ENCODE measurements at regions of chr11 and their contacts with region 1.

Region 1: GRCh38 chr11:70191495-70192140 is 11.5 kb upstream of the FADD start:
- DNase-seq: peak in 3 of 5 donors; percentile 8 to 24 (median 21)
- H3K4me3 ChIP-seq: no peak overlapping the region
- H3K4me3 Mint-ChIP-seq: no peak overlapping the region
- H3K27ac ChIP-seq: no peak overlapping the region
- H3K27ac Mint-ChIP-seq: no peak overlapping the region
- H3K4me1 ChIP-seq: peaks cover 4% of the 10 kb centered on the region
- H3K4me1 Mint-ChIP-seq: peaks cover 0 to 6% (median 4%) of the 10 kb centered on the region in 4 donors
- H3K27me3 ChIP-seq: no peaks in the 10 kb centered on the region
- H3K27me3 Mint-ChIP-seq: peaks cover 7 to 8% of the 10 kb centered on the region in 2 donors

Region 2: DNA sequence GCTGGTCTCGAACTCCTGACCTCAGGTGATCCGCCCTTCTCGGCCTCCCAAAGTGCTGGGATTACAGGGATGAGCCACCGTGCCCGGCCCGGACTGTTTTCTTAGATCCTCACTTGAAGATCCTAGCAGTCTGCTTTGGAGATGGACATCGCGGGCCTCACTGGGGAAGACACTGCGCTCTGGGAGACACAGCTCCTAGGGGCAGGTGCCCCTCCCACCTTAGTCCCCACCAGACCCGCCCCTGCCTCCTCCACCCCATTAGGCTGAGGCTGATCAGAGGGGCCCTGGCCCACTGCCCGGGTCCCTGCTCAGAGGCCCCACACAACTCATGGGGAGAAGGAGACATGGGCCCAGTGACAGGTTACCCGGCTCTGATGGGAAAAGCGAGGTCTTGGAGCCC is 505.2 kb before region 1 on chr11:
- CTCF ChIA-PET with region 1: interaction called, 3 read pairs
- POLR2A ChIA-PET with region 1: interaction called, 3 read pairs
- intact Hi-C with region 1: loop called (anchors 2 kb)
- DNase-seq: no peak
- H3K4me3 ChIP-seq: no peak overlapping the region
- H3K4me3 Mint-ChIP-seq: peak overlapping the region in 1 of 8 donors; percentile 39
- H3K27ac ChIP-seq: no peak overlapping the region
- H3K27ac Mint-ChIP-seq: no peak overlapping the region
- H3K4me1 ChIP-seq: peaks cover 7% of the 10 kb centered on the region
- H3K4me1 Mint-ChIP-seq: peaks cover 2 to 7% (median 4%) of the 10 kb centered on the region in 4 donors
- H3K27me3 ChIP-seq: no peaks in the 10 kb centered on the region
- H3K27me3 Mint-ChIP-seq: peaks cover 12 to 16% of the 10 kb centered on the region in 2 donors

Region 3: GRCh38 chr11:69909561-69910496 is 281.8 kb before region 1 on chr11:
- CTCF ChIA-PET with region 1: interaction called, 4 read pairs
- POLR2A ChIA-PET with region 1: no interaction called
- intact Hi-C with region 1: loop called (anchors 2 kb)
- DNase-seq: no peak
- H3K4me3 ChIP-seq: no peak overlapping the region
- H3K4me3 Mint-ChIP-seq: no peak overlapping the region
- H3K27ac ChIP-seq: no peak overlapping the region
- H3K27ac Mint-ChIP-seq: no peak overlapping the region
- H3K4me1 ChIP-seq: no peaks in the 10 kb centered on the region
- H3K4me1 Mint-ChIP-seq: no peaks in the 10 kb centered on the region
- H3K27me3 ChIP-seq: no peaks in the 10 kb centered on the region
- H3K27me3 Mint-ChIP-seq: peaks cover 11 to 20% of the 10 kb centered on the region in 2 donors

Region 4: DNA sequence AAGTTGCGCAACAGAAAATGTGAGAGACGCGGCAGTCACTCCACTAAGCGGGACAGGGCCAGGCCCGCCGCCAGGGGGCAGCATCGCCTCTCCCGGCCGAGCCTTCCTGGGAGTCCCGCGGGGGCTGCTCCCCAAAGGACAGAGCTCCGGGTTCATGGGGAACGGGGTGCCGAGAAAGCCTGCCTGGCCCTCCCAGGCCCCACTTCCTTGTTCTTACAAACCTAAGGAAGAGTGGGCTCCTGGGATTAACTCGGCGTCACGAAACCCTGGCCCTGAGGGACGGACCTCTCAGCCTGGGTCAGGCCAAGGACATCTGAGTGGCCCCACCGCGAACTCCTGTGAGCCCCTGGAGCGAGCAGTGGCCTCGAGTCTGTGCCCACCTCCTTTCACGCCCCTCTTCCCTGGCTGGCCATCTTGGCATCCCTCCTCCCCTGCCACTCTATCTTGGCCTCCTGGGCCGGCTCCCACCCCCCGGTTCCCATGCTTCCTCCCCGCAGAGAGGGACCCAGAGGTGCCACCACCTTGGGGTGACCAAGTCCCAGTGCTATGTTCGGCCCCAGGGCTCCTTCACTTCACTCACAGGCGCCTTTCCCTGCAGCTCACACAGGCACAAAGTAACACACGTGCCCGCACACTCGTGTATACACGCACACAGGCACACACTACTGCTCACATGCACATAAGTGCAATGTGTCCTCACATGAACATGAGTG is 272.5 kb before region 1 on chr11:
- CTCF ChIA-PET with region 1: interaction called, 11 read pairs
- POLR2A ChIA-PET with region 1: no interaction called
- intact Hi-C with region 1: loop called (anchors 1 kb)
- DNase-seq: peak in 4 of 5 donors; percentile 43 to 58 (median 46)
- H3K4me3 ChIP-seq: no peak overlapping the region
- H3K4me3 Mint-ChIP-seq: no peak overlapping the region
- H3K27ac ChIP-seq: no peak overlapping the region
- H3K27ac Mint-ChIP-seq: peak overlapping the region in 1 of 7 donors; percentile 41
- H3K4me1 ChIP-seq: no peaks in the 10 kb centered on the region
- H3K4me1 Mint-ChIP-seq: peaks cover 0 to 4% (median 3%) of the 10 kb centered on the region in 4 donors
- H3K27me3 ChIP-seq: no peaks in the 10 kb centered on the region
- H3K27me3 Mint-ChIP-seq: peaks cover 19 to 21% of the 10 kb centered on the region in 2 donors

Region 5: GRCh38 chr11:70153133-70153727 is 38.4 kb before region 1 on chr11:
- CTCF ChIA-PET with region 1: no interaction called
- POLR2A ChIA-PET with region 1: no interaction called
- intact Hi-C with region 1: no loop called
- DNase-seq: no peak
- H3K4me3 ChIP-seq: no peak overlapping the region
- H3K4me3 Mint-ChIP-seq: no peak overlapping the region
- H3K27ac ChIP-seq: no peak overlapping the region
- H3K27ac Mint-ChIP-seq: no peak overlapping the region
- H3K4me1 ChIP-seq: no peaks in the 10 kb centered on the region
- H3K4me1 Mint-ChIP-seq: no peaks in the 10 kb centered on the region
- H3K27me3 ChIP-seq: no peaks in the 10 kb centered on the region
- H3K27me3 Mint-ChIP-seq: peaks cover 5 to 10% of the 10 kb centered on the region in 2 donors

Measured in CD4-positive, alpha-beta memory T cell (primary cell).